IMR-90 (cell line): ENCODE measurements at regions of chr4 and their contacts with region 1.

Region 1: GRCh38 chr4:118139241-118139640 is 105.0 kb downstream of the NDST3 start:
- DNase-seq: no peak
- ATAC-seq: no peak
- H3K4me3 ChIP-seq: no peak overlapping the region
- H3K27ac ChIP-seq: no peak overlapping the region
- H3K4me1 ChIP-seq: no peaks in the 10 kb centered on the region
- H3K27me3 ChIP-seq: no peaks in the 10 kb centered on the region
- CTCF ChIP-seq: no peak
- POLR2A ChIP-seq: no peak
- RAD21 ChIP-seq: no peak

Region 2: GRCh38 chr4:118173956-118174725 is 34.9 kb after region 1 on chr4:
- CTCF ChIA-PET with region 1: no interaction called
- POLR2A ChIA-PET with region 1: no interaction called
- dilution Hi-C with region 1: no loop called
- in situ Hi-C with region 1: no loop called
- intact Hi-C with region 1: loop called (anchors 1 kb)
- DNase-seq: peak; percentile 96
- ATAC-seq: peak; percentile 96
- H3K4me3 ChIP-seq: no peak overlapping the region
- H3K27ac ChIP-seq: peak overlapping the region; percentile 78; the same call in 1 of the 2 replicates
- H3K4me1 ChIP-seq: peaks cover 13% of the 10 kb centered on the region
- H3K27me3 ChIP-seq: no peaks in the 10 kb centered on the region
- CTCF ChIP-seq: no peak
- POLR2A ChIP-seq: no peak
- RAD21 ChIP-seq: no peak